CD8-positive, alpha-beta T cell (primary cell): ENCODE measurements at regions of chr6 and their contacts with region 1.

Region 1: DNA sequence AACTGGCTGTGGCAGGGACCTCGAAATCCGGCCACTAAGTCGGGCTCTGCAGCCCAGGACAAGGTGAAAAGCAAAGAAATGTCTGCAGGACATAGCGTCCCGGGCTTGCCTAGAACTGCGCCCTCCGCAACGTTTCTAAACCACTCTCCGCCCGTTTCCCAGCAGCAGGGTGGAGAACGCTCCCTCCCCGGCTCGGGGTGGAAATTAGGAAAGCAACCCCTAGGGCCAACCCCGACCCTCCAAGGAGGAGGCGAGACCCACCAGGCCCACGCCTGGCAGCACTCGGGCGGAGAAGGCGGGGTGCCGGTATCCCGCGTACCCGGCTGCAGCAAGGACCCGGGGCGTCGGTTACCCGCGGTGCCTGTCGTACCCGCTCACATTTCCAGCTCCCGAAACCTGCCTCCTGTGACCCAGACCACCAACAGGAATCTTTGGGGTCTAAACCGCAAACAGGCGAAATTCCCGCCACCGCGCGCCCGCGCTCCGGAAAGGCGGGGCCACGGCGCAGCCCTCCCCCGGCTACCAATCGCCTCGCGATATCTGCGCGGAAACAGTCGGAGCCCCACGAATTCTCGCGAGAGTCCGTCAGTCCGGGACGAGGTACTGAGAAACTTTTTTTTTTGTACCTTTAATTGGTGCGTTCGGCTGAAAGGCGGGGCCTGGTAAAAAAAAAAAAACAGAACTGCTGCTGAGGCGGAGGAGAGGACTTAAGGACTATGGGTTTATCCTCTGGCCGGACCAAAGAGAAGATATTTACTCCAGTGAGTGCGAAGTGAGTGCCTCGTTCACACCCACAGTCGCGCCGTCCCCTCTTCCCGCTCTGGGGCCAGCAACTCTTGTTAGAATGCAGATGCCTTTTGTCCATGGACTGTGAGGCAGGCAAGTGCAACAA is at the start of gene MMS22L:
- DNase-seq: peak; percentile 80 to 97 (median 91)
- ATAC-seq: peak; percentile 98
- H3K4me3 ChIP-seq: peak within 1 kb of the TSS; percentile 61 to 94
- H3K4me3 Mint-ChIP-seq: peak within 1 kb of the TSS; percentile 95
- H3K27ac ChIP-seq: peak within 1 kb of the TSS; percentile 53 to 58
- H3K27ac Mint-ChIP-seq: peak within 1 kb of the TSS; percentile 89
- H3K4me1 ChIP-seq: peaks cover 8% of the 10 kb centered on the region
- H3K4me1 Mint-ChIP-seq: peaks cover 33% of the 10 kb centered on the region
- H3K27me3 ChIP-seq: no peaks in the 10 kb centered on the region
- H3K27me3 Mint-ChIP-seq: no peaks in the 10 kb centered on the region
- CTCF ChIP-seq: no peak
- total RNA-seq, gene MMS22L: 3.1 to 3.3 TPM

Region 2: DNA sequence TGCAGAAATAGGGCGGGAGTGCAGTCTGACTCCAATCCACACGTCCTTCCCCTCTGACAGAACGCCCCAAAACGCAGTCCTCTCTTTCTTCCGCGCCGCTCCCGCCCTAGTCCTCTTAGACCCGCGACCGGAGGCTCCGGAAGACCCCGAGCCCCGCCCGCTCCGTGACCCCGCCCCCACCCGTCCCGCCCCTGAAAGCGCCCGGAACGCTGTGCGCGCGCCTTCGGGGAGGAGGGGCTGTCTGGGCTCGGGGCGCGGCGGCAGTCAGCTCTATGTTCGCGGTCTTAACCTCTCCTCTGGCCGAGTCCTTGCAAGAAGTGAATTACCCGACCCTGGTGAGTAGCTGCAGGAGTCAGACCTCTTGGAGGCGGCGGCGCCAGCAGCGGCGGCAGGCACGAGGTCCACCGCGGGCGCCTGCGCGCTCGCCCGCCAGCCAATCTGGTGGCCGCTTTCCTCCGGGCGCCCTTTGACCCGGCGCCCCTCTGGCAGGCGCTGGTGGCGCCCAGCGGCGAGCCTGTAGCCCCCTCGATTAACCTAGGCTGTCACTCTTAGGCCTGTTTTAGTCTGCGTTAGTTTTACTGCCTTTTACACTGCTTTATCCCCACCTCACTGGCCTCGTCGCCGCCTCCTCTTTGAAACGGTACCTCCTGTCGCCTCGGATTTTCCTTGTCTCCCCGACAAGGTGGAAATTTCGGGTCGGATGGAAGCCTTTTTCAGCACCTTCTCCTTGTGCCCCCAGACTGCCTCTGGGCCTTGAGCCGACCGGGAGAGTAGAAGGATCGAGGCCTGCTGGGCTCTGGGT is 1705.5 kb before region 1 on chr6 and contains the start of gene MANEA:
- CTCF ChIA-PET with region 1: no interaction called
- POLR2A ChIA-PET with region 1: no interaction called
- intact Hi-C with region 1: loop called (anchors 2 to 5 kb)
- DNase-seq: peak; percentile 69 to 91 (median 81)
- ATAC-seq: peak; percentile 84
- H3K4me3 ChIP-seq: peak within 1 kb of the TSS; percentile 70 to 89
- H3K4me3 Mint-ChIP-seq: peak within 1 kb of the TSS; percentile 94
- H3K27ac ChIP-seq: peak within 1 kb of the TSS; percentile 85 to 89
- H3K27ac Mint-ChIP-seq: peak within 1 kb of the TSS; percentile 98
- H3K4me1 ChIP-seq: peaks cover 30% of the 10 kb centered on the region
- H3K4me1 Mint-ChIP-seq: peaks cover 62% of the 10 kb centered on the region
- H3K27me3 ChIP-seq: no peaks in the 10 kb centered on the region
- H3K27me3 Mint-ChIP-seq: no peaks in the 10 kb centered on the region
- CTCF ChIP-seq: no peak
- total RNA-seq, gene MANEA: 5.3 to 6.0 TPM

Region 3: GRCh38 chr6:96837081-96837971 is 445.6 kb before region 1 on chr6 and contains the start of gene GPR63:
- CTCF ChIA-PET with region 1: no interaction called
- POLR2A ChIA-PET with region 1: no interaction called
- intact Hi-C with region 1: loop called in 1 of 2 experiments (anchors 5 kb)
- DNase-seq: peak in 8 of 9 experiments; percentile 24 to 76 (median 55)
- ATAC-seq: peak; percentile 79
- H3K4me3 ChIP-seq: peak within 1 kb of the TSS; percentile 65 to 74
- H3K4me3 Mint-ChIP-seq: peak within 1 kb of the TSS; percentile 82
- H3K27ac ChIP-seq: no peak within 1 kb of the TSS
- H3K27ac Mint-ChIP-seq: peak within 1 kb of the TSS; percentile 6
- H3K4me1 ChIP-seq: peaks cover 15% of the 10 kb centered on the region
- H3K4me1 Mint-ChIP-seq: peaks cover 16% of the 10 kb centered on the region
- H3K27me3 ChIP-seq: peaks cover 0 to 12% of the 10 kb centered on the region in 2 experiments
- H3K27me3 Mint-ChIP-seq: peaks cover 44% of the 10 kb centered on the region
- CTCF ChIP-seq: no peak
- total RNA-seq, gene GPR63: not detected

Region 4: GRCh38 chr6:97305414-97306066 is 22.6 kb after region 1 on chr6:
- CTCF ChIA-PET with region 1: no interaction called
- POLR2A ChIA-PET with region 1: no interaction called
- intact Hi-C with region 1: no loop called
- DNase-seq: no peak
- ATAC-seq: no peak
- H3K4me3 ChIP-seq: no peak overlapping the region
- H3K4me3 Mint-ChIP-seq: no peak overlapping the region
- H3K27ac ChIP-seq: no peak overlapping the region
- H3K27ac Mint-ChIP-seq: no peak overlapping the region
- H3K4me1 ChIP-seq: no peaks in the 10 kb centered on the region
- H3K4me1 Mint-ChIP-seq: no peaks in the 10 kb centered on the region
- H3K27me3 ChIP-seq: peaks cover 2 to 4% of the 10 kb centered on the region in 2 experiments
- H3K27me3 Mint-ChIP-seq: peaks cover 7% of the 10 kb centered on the region
- CTCF ChIP-seq: no peak

Region 5: DNA sequence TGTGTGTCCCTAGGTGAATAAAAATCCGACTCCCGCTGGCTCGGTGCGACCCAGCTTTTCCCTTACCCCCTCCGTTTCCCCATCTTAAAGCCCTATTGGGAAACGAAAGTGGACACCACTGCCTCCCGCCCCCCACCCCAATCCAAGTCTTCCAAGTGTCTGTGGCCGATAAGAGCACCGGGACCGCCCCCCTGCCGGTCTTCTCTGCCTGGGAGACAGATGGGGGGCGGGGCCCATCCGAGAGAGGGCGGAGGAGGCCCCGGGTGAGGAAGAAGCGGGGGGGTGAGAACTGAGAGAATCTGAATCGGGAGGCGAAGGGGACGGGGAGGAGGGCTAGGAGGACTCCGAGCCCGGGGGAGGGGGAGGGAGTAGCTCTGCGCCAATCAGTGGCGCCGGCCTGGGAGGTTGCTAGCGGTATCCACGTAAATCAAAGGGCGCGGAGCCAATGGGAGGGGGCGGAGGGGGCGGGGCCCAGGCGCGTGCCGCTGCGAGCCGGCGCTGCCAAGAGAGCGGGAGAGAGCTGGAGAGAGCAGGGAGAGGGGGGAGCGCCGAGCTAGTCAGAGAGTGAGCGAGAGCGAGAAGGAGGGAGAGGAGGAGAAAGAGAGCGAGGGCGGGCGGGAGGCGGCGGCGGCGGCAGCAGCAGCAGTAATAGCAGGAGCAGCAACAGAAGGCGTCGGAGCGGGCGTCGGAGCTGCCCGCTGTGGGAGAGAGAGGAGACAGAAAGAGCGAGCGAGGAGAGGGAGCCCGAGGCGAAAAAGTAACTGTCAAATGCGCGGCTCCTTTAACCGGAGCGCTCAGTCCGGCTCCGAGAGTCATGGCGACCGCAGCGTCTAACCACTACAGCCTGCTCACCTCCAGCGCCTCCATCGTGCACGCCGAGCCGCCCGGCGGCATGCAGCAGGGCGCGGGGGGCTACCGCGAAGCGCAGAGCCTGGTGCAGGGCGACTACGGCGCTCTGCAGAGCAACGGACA is 1551.4 kb after region 1 on chr6 and contains the start of gene POU3F2:
- CTCF ChIA-PET with region 1: no interaction called
- POLR2A ChIA-PET with region 1: no interaction called
- intact Hi-C with region 1: loop called in 1 of 2 experiments (anchors 10 kb)
- DNase-seq: peak in 8 of 9 experiments; percentile 35 to 74 (median 59)
- ATAC-seq: peak; percentile 67
- H3K4me3 ChIP-seq: peak within 1 kb of the TSS; percentile 55 to 58
- H3K4me3 Mint-ChIP-seq: peak within 1 kb of the TSS; percentile 94
- H3K27ac ChIP-seq: no peak within 1 kb of the TSS
- H3K27ac Mint-ChIP-seq: no peak within 1 kb of the TSS
- H3K4me1 ChIP-seq: peaks cover 29% of the 10 kb centered on the region
- H3K4me1 Mint-ChIP-seq: peaks cover 43% of the 10 kb centered on the region
- H3K27me3 ChIP-seq: peaks cover 44 to 61% of the 10 kb centered on the region in 2 experiments
- H3K27me3 Mint-ChIP-seq: peaks cover 65% of the 10 kb centered on the region
- CTCF ChIP-seq: no peak
- total RNA-seq, gene POU3F2: not detected

Region 6: DNA sequence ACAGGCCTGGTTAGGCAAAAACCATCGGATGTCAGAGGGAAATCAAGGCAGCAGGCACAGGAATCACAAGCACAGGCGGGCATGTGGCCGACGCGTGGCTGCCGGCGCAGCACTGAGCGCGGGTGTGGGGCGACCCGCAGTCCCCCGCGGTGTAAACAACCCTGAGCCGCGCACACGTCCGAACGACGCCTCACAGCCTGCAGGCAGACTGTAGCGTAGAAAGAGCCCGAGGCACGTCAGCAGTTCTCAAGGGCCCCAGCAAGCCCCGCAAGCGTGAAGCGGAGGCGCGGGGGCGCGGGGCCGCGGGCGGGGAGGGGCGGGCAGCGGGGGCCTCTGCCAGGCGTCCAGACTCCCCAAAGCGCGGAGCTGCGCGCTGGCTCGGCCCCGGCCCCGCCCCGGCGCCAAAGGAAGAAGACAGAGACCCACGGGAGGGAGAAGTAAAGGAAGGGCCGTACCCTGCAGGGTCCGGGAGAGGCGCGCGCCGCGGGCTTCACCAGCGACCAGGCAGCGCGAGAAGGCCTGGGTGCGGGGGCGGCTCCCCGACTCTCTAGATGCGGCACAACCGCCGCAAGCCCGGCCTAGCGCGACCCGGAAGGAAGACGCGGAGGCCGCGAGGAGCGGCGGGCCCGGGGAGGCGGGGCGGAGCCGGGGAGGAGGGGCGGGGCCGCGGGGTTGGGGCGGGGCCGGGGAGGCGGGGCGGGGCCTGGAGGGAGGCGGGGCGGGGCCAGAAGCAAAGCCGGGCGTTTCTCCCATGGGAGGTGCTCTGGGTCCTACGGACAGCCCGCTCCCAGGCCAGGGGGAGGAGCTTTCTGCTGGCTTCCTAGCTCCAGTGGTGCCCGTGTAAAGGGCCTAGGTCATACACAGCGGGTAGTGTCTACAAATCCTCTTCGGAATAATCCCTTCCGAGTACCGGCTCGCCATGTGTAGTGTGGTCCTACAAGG is 1664.7 kb after region 1 on chr6 and contains the start of gene FBXL4:
- CTCF ChIA-PET with region 1: no interaction called
- POLR2A ChIA-PET with region 1: no interaction called
- intact Hi-C with region 1: loop called in 1 of 2 experiments (anchors 5 kb)
- DNase-seq: peak; percentile 53 to 87 (median 72)
- ATAC-seq: peak; percentile 82
- H3K4me3 ChIP-seq: peak within 1 kb of the TSS; percentile 61 to 64
- H3K4me3 Mint-ChIP-seq: peak within 1 kb of the TSS; percentile 94
- H3K27ac ChIP-seq: peak within 1 kb of the TSS; percentile 46 to 56
- H3K27ac Mint-ChIP-seq: peak within 1 kb of the TSS; percentile 96
- H3K4me1 ChIP-seq: peaks cover 11% of the 10 kb centered on the region
- H3K4me1 Mint-ChIP-seq: peaks cover 34% of the 10 kb centered on the region
- H3K27me3 ChIP-seq: no peaks in the 10 kb centered on the region
- H3K27me3 Mint-ChIP-seq: no peaks in the 10 kb centered on the region
- CTCF ChIP-seq: no peak
- total RNA-seq, gene FBXL4: 4.1 to 5.1 TPM